Caco-2 (cell line): ENCODE measurements at regions of chr13 and their contacts with region 1.

Region 1: GRCh38 chr13:53545340-53545941 is 516.8 kb downstream of the OLFM4 start:
- DNase-seq: no peak
- H3K4me3 ChIP-seq: no peak overlapping the region
- H3K4me3 Mint-ChIP-seq: no peak overlapping the region
- H3K27ac Mint-ChIP-seq: no peak overlapping the region
- H3K4me1 ChIP-seq: no peaks in the 10 kb centered on the region
- H3K4me1 Mint-ChIP-seq: no peaks in the 10 kb centered on the region
- H3K27me3 ChIP-seq: no peaks in the 10 kb centered on the region
- H3K27me3 Mint-ChIP-seq: peaks cover 6% of the 10 kb centered on the region
- CTCF ChIP-seq: no peak

Region 2: GRCh38 chr13:53137779-53138178 is 407.7 kb before region 1 on chr13:
- CTCF ChIA-PET with region 1: no interaction called
- POLR2A ChIA-PET with region 1: no interaction called
- intact Hi-C with region 1: no loop called
- DNase-seq: no peak
- H3K4me3 ChIP-seq: no peak overlapping the region
- H3K4me3 Mint-ChIP-seq: no peak overlapping the region
- H3K27ac Mint-ChIP-seq: no peak overlapping the region
- H3K4me1 ChIP-seq: no peaks in the 10 kb centered on the region
- H3K4me1 Mint-ChIP-seq: no peaks in the 10 kb centered on the region
- H3K27me3 ChIP-seq: no peaks in the 10 kb centered on the region
- H3K27me3 Mint-ChIP-seq: no peaks in the 10 kb centered on the region
- CTCF ChIP-seq: no peak

Region 3: GRCh38 chr13:53569453-53569852 is 24.0 kb after region 1 on chr13:
- CTCF ChIA-PET with region 1: no interaction called
- POLR2A ChIA-PET with region 1: no interaction called
- intact Hi-C with region 1: loop called (anchors 1 kb)
- DNase-seq: no peak
- H3K4me3 ChIP-seq: no peak overlapping the region
- H3K4me3 Mint-ChIP-seq: no peak overlapping the region
- H3K27ac Mint-ChIP-seq: no peak overlapping the region
- H3K4me1 ChIP-seq: no peaks in the 10 kb centered on the region
- H3K4me1 Mint-ChIP-seq: no peaks in the 10 kb centered on the region
- H3K27me3 ChIP-seq: no peaks in the 10 kb centered on the region
- H3K27me3 Mint-ChIP-seq: peaks cover 10% of the 10 kb centered on the region
- CTCF ChIP-seq: no peak

Region 4: GRCh38 chr13:53612200-53612599 is 66.8 kb after region 1 on chr13:
- CTCF ChIA-PET with region 1: no interaction called
- POLR2A ChIA-PET with region 1: no interaction called
- intact Hi-C with region 1: no loop called
- DNase-seq: no peak
- H3K4me3 ChIP-seq: no peak overlapping the region
- H3K4me3 Mint-ChIP-seq: no peak overlapping the region
- H3K27ac Mint-ChIP-seq: no peak overlapping the region
- H3K4me1 ChIP-seq: no peaks in the 10 kb centered on the region
- H3K4me1 Mint-ChIP-seq: no peaks in the 10 kb centered on the region
- H3K27me3 ChIP-seq: no peaks in the 10 kb centered on the region
- H3K27me3 Mint-ChIP-seq: no peaks in the 10 kb centered on the region
- CTCF ChIP-seq: no peak

Region 5: GRCh38 chr13:54051527-54051926 is 506.1 kb after region 1 on chr13:
- CTCF ChIA-PET with region 1: no interaction called
- POLR2A ChIA-PET with region 1: no interaction called
- intact Hi-C with region 1: no loop called
- DNase-seq: no peak
- H3K4me3 ChIP-seq: no peak overlapping the region
- H3K4me3 Mint-ChIP-seq: no peak overlapping the region
- H3K27ac Mint-ChIP-seq: no peak overlapping the region
- H3K4me1 ChIP-seq: no peaks in the 10 kb centered on the region
- H3K4me1 Mint-ChIP-seq: no peaks in the 10 kb centered on the region
- H3K27me3 ChIP-seq: no peaks in the 10 kb centered on the region
- H3K27me3 Mint-ChIP-seq: no peaks in the 10 kb centered on the region
- CTCF ChIP-seq: no peak